PC-9 (cell line): ENCODE measurements at regions of chr3 and their contacts with region 1.

Region 1: DNA sequence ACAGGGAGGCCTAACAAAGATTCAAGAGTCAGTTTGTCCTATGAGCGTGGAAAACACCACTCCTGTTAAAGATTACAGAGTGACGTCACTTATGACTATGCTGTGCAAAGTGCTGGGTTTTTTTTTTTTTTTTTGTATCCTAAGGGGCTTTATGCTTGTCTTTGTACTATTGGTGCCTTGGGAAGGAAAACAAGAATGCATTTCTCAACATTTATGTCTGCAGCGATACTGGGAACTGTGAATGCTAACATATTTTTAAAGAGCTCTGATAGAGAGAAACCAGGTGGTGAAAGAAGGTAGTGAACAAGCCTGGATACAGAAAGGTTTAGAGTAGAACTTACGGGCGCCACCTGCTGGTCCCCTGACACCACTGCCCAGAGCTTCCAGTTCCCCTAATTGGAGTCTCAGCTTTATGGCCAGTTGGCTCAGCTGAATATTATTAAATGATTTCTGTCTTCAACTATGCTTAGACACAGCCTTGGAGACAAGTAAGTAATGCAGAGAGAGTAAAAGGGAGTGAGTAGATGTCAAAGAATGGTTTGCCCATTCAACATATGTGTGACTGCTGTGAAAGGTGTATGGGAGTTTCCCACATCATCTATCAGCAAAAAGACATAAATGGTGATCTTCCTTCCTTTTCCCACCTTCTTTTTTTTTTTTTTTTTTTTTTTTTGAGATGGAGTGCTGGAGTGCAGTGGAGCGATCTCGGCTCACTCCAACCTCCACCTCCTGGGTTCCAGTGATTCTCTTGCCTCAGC is 807.9 kb upstream of the CFAP20DC start:
- DNase-seq: peak; percentile 56 to 70
- H3K4me3 ChIP-seq: no peak overlapping the region
- H3K27ac ChIP-seq: no peak overlapping the region
- H3K4me1 ChIP-seq: no peaks in the 10 kb centered on the region; the same call in 1 of the 2 replicates
- H3K27me3 ChIP-seq: no peaks in the 10 kb centered on the region
- CTCF ChIP-seq: peak; percentile 87

Region 2: DNA sequence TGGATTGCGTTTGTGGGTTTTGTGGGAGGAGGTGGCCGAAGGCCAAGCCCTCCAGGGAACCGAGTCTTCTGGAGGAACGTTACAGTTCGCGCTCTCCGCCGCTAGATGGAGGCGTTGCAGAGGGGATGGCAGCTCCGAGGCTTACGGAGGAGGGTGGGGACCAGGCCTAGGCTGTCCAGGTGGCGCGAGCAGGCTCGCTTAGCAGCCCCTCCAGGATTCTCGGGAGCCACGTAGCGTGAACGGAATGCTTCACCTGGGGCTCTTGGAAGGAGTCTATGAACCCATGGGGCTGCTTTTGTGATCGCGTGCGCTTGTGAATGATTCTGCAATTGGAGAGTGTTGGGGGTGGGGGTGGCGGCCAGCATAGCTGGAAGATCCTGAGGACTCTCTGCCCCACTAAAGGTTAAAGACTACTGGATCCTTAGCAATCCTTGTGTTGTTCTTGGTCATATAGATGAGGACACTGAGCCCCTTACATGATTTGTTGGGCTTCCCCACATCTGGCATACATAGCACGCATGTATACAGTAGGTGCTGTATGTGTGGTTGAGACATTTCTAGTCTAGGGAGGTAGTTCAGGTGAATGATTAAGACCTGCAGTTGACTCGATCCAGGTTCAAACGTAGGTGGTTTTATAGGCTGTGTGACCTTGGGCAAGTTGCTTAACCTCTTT is 1216.9 kb before region 1 on chr3:
- CTCF ChIA-PET with region 1: interaction called, 13 read pairs
- POLR2A ChIA-PET with region 1: no interaction called
- intact Hi-C with region 1: no loop called
- DNase-seq: peak; percentile 69 to 81
- H3K4me3 ChIP-seq: no peak overlapping the region
- H3K27ac ChIP-seq: no peak overlapping the region
- H3K4me1 ChIP-seq: no peaks in the 10 kb centered on the region
- H3K27me3 ChIP-seq: no peaks in the 10 kb centered on the region
- CTCF ChIP-seq: peak; percentile 88

Region 3: DNA sequence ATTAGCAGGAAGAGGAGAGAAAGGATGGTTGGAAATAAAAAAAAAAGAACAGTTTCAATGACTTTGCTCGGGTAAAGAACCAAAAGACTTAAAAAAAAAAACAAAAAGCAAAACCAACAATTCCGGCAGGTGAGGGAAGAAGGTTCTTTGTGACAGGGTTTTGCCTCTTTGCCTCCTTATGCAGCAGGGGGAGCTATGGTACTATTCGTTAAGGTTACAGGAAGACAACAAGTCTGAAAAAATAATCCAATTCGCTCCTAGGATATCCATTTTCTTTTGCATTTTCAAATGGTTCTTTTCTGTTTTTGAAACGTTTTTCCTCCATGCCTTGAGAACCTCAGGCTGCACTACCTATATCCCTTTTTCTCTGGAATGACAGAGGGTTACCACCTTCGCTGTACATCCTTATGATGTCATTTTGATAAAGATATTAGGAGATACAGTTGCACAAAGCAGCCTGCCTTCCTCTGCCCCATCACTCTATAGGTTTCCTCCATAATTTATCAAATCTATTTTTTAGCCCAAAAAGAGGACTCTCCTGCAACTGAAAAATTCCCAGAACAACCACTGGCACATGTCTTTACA is 862.9 kb before region 1 on chr3:
- CTCF ChIA-PET with region 1: interaction called, 7 read pairs
- POLR2A ChIA-PET with region 1: interaction called, 4 read pairs
- intact Hi-C with region 1: loop called (anchors 2 kb)
- DNase-seq: peak in 1 of 2 experiments; percentile 35
- H3K4me3 ChIP-seq: no peak overlapping the region
- H3K27ac ChIP-seq: no peak overlapping the region
- H3K4me1 ChIP-seq: peaks cover 16% of the 10 kb centered on the region
- H3K27me3 ChIP-seq: no peaks in the 10 kb centered on the region
- CTCF ChIP-seq: peak; percentile 78

Region 4: DNA sequence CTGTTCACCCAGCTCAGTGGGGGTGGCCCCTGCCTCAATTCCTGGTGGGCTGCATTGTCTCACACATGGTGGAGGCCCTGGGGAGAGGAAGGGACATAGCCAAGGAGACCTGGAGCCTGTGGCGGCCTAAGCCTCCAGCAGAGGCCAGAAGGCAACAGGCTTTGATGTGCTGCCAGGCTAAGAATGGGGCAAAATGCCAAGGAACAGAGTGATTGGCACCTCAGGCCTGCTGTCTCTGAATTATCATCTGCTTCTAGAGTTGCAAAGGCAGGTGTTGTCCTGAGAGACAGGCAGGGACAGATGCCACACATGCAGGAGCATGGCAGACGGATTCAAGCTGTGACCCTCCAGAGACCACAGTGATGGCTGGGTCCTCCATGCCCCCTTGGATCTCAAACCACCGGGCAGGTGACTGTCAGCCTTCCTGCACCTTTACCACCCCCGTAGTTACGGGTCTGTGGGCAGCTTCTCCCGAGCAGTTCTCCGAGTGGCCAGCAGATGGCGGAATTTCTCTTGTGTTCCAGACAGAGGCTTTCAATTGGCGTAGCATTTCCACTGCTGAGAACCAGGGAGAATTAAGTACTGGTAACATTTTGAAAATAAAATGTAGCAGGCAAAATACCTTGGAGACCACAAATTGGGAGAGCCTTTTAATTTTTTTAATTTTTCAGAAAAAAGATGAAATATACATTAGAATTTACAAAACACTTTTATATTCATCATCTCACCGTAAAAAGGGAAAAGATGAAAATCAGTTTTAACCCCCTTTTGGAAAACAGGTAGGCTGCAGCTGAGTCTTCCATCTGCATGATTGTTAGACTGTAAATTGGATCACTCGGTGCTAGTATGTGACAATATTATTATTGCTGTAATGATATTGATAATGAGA is 282.4 kb before region 1 on chr3:
- CTCF ChIA-PET with region 1: interaction called, 9 read pairs
- POLR2A ChIA-PET with region 1: no interaction called
- intact Hi-C with region 1: loop called (anchors 1 kb)
- DNase-seq: peak; percentile 50 to 74
- H3K4me3 ChIP-seq: no peak overlapping the region
- H3K27ac ChIP-seq: no peak overlapping the region
- H3K4me1 ChIP-seq: peaks cover 7% of the 10 kb centered on the region
- H3K27me3 ChIP-seq: no peaks in the 10 kb centered on the region
- CTCF ChIP-seq: peak; percentile 97

Region 5: GRCh38 chr3:59818033-59818920 is 39.5 kb before region 1 on chr3:
- CTCF ChIA-PET with region 1: interaction called, 18 read pairs
- POLR2A ChIA-PET with region 1: no interaction called
- intact Hi-C with region 1: no loop called
- DNase-seq: peak; percentile 82 to 91
- H3K4me3 ChIP-seq: peak overlapping the region; percentile 35; the same call in 1 of the 2 replicates
- H3K27ac ChIP-seq: peak overlapping the region; percentile 95
- H3K4me1 ChIP-seq: peaks cover 56% of the 10 kb centered on the region
- H3K27me3 ChIP-seq: no peaks in the 10 kb centered on the region
- CTCF ChIP-seq: no peak